ENCODE measurements at regions of chr7 and their contacts with region 1.

Region 1: GRCh38 chr7:103573479-103574058 is 127.6 kb upstream of the SLC26A5 start:
- DNase-seq: peak; percentile 45
- H3K4me3 ChIP-seq: no peak overlapping the region
- H3K27ac ChIP-seq: no peak overlapping the region
- H3K4me1 ChIP-seq: no peaks in the 10 kb centered on the region
- H3K27me3 ChIP-seq: peaks cover 76% of the 10 kb centered on the region
- CTCF ChIP-seq: peak; percentile 64

Region 2: GRCh38 chr7:104267701-104268368 is 694.3 kb after region 1 on chr7:
- CTCF ChIA-PET with region 1: no interaction called
- POLR2A ChIA-PET with region 1: no interaction called
- intact Hi-C with region 1: loop called (anchors 5 kb)
- DNase-seq: peak; percentile 40
- H3K4me3 ChIP-seq: no peak overlapping the region
- H3K27ac ChIP-seq: no peak overlapping the region
- H3K4me1 ChIP-seq: no peaks in the 10 kb centered on the region
- H3K27me3 ChIP-seq: peaks cover 15% of the 10 kb centered on the region
- CTCF ChIP-seq: peak; percentile 71